PC-3 (cell line): ENCODE measurements at regions of chr6 and their contacts with region 1.

Region 1: GRCh38 chr6:12233693-12234571 is 56.2 kb upstream of the EDN1 start:
- DNase-seq: peak; percentile 90
- ATAC-seq: peak; percentile 94
- H3K4me3 ChIP-seq: no peak overlapping the region
- H3K27ac ChIP-seq: no peak overlapping the region
- H3K4me1 ChIP-seq: peaks cover 10% of the 10 kb centered on the region
- H3K27me3 ChIP-seq: no peaks in the 10 kb centered on the region
- CTCF ChIP-seq: peak; percentile 97

Region 2: DNA sequence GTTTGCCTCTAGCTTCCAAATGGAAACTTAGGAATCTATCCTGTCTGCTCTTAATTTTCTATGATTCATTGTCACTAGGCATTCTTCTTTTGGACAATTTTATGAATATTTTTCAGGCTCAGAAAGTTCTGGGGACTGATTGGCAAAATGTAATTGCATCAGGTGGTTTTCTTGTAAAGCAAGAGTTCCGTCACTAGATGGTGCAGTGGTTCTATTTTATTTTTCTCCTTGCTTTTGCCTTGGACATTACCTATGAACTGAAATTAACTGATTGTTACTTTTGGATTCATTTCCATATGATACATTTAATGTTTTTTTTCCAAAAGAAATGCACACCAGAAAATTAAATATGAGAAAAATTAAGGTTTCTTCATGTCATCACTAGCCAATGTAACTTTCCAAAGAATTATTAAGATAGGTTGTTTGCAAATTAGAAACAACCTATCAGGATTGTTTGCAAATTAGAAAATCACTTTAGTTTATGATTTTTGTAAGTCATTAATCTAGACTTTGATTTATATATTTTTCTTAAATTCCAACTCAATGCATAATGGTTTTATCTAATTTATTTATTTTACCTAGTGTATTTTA is 648.4 kb before region 1 on chr6:
- CTCF ChIA-PET with region 1: no interaction called
- POLR2A ChIA-PET with region 1: no interaction called
- intact Hi-C with region 1: loop called (anchors 2 kb)
- DNase-seq: peak; percentile 80
- ATAC-seq: peak; percentile 29; the same call in 1 of the 2 replicates
- H3K4me3 ChIP-seq: no peak overlapping the region
- H3K27ac ChIP-seq: no peak overlapping the region
- H3K4me1 ChIP-seq: peaks cover 11% of the 10 kb centered on the region
- H3K27me3 ChIP-seq: no peaks in the 10 kb centered on the region
- CTCF ChIP-seq: peak; percentile 83

Region 3: GRCh38 chr6:12034835-12035234 is 199.1 kb before region 1 on chr6:
- CTCF ChIA-PET with region 1: interaction called, 3 read pairs
- POLR2A ChIA-PET with region 1: interaction called, 4 read pairs
- intact Hi-C with region 1: loop called (anchors 5 kb)
- DNase-seq: no peak
- ATAC-seq: peak; percentile 42; the same call in 1 of the 2 replicates
- H3K4me3 ChIP-seq: no peak overlapping the region
- H3K27ac ChIP-seq: no peak overlapping the region
- H3K4me1 ChIP-seq: peaks cover 6% of the 10 kb centered on the region; the same call in 1 of the 2 replicates
- H3K27me3 ChIP-seq: no peaks in the 10 kb centered on the region
- CTCF ChIP-seq: peak; percentile 29; the same call in 1 of the 2 replicates

Region 4: GRCh38 chr6:12313992-12314805 is 80.3 kb after region 1 on chr6:
- CTCF ChIA-PET with region 1: no interaction called
- POLR2A ChIA-PET with region 1: no interaction called
- intact Hi-C with region 1: no loop called
- DNase-seq: peak; percentile 96
- ATAC-seq: peak; percentile 78
- H3K4me3 ChIP-seq: no peak overlapping the region
- H3K27ac ChIP-seq: peak overlapping the region; percentile 80
- H3K4me1 ChIP-seq: peaks cover 21% of the 10 kb centered on the region
- H3K27me3 ChIP-seq: no peaks in the 10 kb centered on the region
- CTCF ChIP-seq: no peak

Region 5: DNA sequence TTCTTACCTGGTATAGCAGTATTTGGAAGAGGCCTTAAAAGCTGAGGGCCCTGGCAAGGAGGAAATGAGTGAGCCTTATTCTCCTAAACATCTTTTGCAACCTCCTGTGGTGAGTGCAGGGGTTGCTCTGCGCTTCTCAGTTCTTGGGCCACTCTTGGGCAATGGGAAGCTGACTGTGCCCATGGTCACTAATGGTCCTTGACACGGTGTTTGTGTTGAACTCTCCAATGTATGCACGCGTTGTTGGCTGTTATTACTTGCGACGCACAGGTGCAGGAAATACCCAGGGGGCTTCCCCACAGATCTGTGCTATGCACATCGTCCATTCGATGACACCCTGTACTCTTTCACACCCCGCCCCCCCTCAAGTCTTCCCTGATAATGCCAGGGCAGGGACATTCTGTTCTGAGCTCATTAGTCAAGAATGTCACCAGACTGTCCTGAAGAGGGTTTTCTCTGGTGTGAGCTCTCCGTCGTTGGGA is 135.9 kb after region 1 on chr6:
- CTCF ChIA-PET with region 1: no interaction called
- POLR2A ChIA-PET with region 1: no interaction called
- intact Hi-C with region 1: loop called (anchors 1 kb)
- DNase-seq: peak; percentile 86
- ATAC-seq: peak; percentile 83
- H3K4me3 ChIP-seq: no peak overlapping the region
- H3K27ac ChIP-seq: 0 out of 2 replicates have a peak overlapping the region, but pooled peaks have one; percentile 2
- H3K4me1 ChIP-seq: peaks cover 25% of the 10 kb centered on the region
- H3K27me3 ChIP-seq: no peaks in the 10 kb centered on the region
- CTCF ChIP-seq: peak; percentile 69

Region 6: GRCh38 chr6:12403201-12403826 is 169.4 kb after region 1 on chr6:
- CTCF ChIA-PET with region 1: no interaction called
- POLR2A ChIA-PET with region 1: no interaction called
- intact Hi-C with region 1: no loop called
- DNase-seq: peak; percentile 68
- ATAC-seq: peak; percentile 74
- H3K4me3 ChIP-seq: no peak overlapping the region
- H3K27ac ChIP-seq: no peak overlapping the region
- H3K4me1 ChIP-seq: peaks cover 15% of the 10 kb centered on the region
- H3K27me3 ChIP-seq: no peaks in the 10 kb centered on the region
- CTCF ChIP-seq: no peak